Right ventricle myocardium inferior (tissue), 1 donor: ENCODE measurements at regions of chr3 and their contacts with region 1.

Region 1: DNA sequence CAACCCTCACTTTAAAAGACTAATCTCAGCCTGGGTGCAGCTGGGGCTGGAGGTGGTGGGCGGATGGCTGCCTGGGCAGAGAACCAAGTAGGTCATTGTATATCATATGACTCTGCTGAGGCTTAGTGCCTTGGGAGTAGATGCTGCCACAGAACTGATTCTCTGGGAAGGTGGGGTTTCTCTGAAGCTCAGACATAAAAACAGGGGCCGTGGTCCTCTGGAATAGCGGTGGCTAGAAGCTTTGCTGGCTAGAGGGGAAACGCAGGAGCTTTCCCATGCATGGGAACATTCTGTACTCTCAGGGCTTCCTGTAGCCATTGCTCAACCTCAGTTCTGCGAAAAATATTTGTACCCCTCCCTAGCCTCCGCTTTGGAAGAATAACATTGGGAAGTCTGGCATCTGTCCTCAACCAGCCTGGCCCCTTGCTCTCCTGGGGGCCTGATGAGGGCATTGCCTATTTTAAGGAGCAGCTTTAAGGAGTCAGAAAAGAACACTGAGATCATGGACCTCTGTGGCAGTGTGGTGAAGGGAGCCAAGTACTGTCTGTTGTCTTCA is 14.7 kb downstream of the TIMP4 start:
- DNase-seq: peak; percentile 65
- ATAC-seq: peak; percentile 91

Region 2: GRCh38 chr3:12107071-12107713 is 36.8 kb before region 1 on chr3:
- intact Hi-C with region 1: no loop called
- DNase-seq: no peak
- ATAC-seq: no peak

Region 3: DNA sequence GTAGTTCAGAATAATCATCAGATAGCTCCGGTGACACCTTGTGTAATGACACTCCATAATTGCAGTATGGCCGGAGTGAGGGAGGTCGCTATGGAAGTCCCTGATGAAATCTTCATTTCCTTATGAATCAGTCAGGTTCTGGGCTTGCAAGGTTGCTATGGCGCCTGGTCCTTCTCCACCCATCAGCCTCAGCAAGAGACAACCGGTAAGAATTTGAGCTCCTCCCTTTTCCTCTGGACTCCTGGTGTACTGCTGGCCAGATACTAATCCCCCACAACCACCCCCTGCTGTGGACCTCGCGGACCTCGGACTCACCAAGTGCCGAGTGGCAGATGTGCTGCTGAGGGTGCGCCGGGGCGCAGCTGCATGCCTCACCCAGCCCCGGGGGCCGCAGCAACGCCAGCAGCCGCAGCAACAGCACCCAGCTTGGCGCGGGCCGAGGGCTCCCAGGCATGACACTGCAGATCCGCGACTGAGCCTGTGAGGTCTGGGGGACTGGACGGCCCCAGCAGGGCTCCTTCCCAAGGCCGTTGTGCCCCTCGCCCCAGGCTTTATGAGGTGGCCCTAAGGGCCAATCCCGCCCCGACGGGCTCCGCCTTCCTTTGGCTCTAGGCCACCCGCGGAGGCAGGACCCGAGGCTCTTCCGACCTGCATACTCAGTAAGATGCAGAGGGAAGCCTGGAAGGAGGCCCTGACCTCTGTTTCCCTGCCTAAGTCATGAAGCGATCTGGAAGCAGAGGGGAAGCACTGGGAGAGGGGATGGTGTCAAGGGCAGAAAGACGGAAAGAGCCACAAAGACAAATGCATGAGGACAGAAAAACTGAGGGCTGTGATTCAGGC is 14.6 kb after region 1 on chr3 and contains the start of gene TIMP4:
- intact Hi-C with region 1: loop called (anchors 2 kb)
- DNase-seq: peak; percentile 77
- ATAC-seq: peak; percentile 76
- total RNA-seq, gene TIMP4: 23.8 TPM